ENCODE measurements at regions of chr7 and their contacts with region 1.

Region 1: GRCh38 chr7:150448789-150449147 is 1.7 kb upstream of the GIMAP8 start:
- DNase-seq: peak; percentile 94
- ATAC-seq: peak; percentile 65
- H3K4me3 Mint-ChIP-seq: peak overlapping the region; percentile 97
- H3K27ac Mint-ChIP-seq: peak overlapping the region; percentile 100
- H3K4me1 Mint-ChIP-seq: peaks cover 46% of the 10 kb centered on the region
- H3K27me3 Mint-ChIP-seq: no peaks in the 10 kb centered on the region
- CTCF ChIP-seq: peak; percentile 95

Region 2: DNA sequence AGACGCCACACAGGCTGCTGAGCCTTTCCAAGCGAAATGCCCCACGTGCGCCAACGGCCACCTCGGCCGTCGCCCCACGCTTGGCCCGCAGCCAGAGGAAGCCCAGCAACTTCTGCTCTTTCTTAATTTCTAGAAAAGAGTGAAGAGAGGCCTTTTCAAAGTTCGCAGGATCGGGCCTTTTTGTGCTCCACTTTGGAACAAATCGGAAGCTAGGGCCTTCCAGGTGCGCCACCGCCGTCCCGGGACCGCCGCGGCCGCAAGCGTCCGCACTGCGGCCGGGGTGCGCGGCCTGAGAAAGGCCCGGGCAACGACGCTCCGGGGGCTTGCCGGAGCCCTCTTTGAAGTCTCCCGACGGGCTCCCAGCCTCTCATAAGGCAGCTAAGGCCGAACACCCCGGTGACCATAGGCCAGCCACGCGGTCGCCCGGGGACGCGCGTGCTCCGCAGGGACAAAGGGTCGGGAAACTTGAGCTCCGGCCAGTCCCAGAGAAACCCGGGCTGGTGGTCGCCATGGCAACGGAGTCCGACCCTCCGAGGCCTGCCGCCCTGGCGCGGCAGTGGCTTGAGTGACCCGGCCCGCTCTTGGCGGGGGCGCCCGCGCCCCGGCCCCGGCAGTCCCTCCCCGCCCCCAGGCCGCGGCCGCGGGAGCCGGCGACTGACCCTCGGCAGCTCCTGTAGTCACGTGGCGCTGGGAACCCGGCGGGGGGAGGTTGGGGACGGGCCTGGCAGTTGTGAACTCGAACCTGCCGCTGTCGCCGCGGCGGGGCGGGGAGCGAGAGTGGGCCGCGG is 80.5 kb before region 1 on chr7 and contains the start of gene REPIN1:
- CTCF ChIA-PET with region 1: interaction called, 3 read pairs
- POLR2A ChIA-PET with region 1: interaction called, 13 read pairs
- intact Hi-C with region 1: no loop called
- DNase-seq: peak; percentile 85
- ATAC-seq: peak; percentile 57
- H3K4me3 Mint-ChIP-seq: peak within 1 kb of the TSS; percentile 97
- H3K27ac Mint-ChIP-seq: peak within 1 kb of the TSS; percentile 97
- H3K4me1 Mint-ChIP-seq: peaks cover 56% of the 10 kb centered on the region
- H3K27me3 Mint-ChIP-seq: no peaks in the 10 kb centered on the region
- CTCF ChIP-seq: no peak
- total RNA-seq, gene REPIN1: 56.0 to 59.2 TPM

Region 3: DNA sequence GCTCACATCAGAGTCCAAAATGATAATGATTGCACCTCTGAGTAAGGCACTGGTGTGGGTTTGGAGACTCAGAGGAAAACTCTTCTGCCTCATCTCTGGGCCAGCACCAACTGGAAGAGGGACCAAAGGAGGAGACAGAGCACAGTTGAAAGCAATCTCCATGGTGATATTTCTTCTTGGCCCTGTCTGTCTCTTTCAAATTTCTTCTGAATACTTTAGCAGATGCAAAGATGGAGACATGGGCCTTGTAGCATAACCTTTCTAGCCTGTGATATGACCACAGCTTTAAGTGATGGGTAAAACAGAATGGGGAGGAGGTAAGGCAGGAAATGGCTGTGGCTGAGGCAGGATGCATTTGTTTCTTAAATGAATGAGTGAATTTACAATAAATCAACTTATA is 53.8 kb after region 1 on chr7:
- CTCF ChIA-PET with region 1: interaction called, 8 read pairs
- POLR2A ChIA-PET with region 1: interaction called, 15 read pairs
- intact Hi-C with region 1: no loop called
- DNase-seq: peak; percentile 70
- ATAC-seq: peak; percentile 75
- H3K4me3 Mint-ChIP-seq: peak overlapping the region; percentile 4
- H3K27ac Mint-ChIP-seq: peak overlapping the region; percentile 92
- H3K4me1 Mint-ChIP-seq: peaks cover 68% of the 10 kb centered on the region
- H3K27me3 Mint-ChIP-seq: no peaks in the 10 kb centered on the region
- CTCF ChIP-seq: no peak

Region 4: DNA sequence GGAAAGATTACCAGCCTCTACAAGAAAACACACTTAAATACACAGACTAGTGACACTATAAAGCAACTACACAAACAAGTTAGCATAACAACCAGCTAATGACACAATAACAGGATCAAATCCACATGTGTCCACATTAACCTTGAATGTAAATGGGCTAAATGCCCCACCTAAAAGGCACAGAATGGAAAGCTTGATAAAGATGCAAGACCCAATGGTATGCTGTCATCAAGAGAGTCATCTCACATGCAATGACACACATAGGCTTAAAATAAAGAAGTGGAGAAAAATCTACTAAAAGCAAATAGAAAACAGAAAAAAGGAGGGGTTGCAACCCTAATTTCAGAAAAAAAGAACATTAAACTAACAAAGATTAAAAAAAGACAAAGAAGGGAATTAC is 104.4 kb after region 1 on chr7:
- CTCF ChIA-PET with region 1: interaction called, 14 read pairs
- POLR2A ChIA-PET with region 1: interaction called, 3 read pairs
- intact Hi-C with region 1: no loop called
- DNase-seq: no peak
- ATAC-seq: no peak
- H3K4me3 Mint-ChIP-seq: no peak overlapping the region
- H3K27ac Mint-ChIP-seq: peak overlapping the region; percentile 78
- H3K4me1 Mint-ChIP-seq: peaks cover 66% of the 10 kb centered on the region
- H3K27me3 Mint-ChIP-seq: no peaks in the 10 kb centered on the region
- CTCF ChIP-seq: no peak

Region 5: GRCh38 chr7:150716368-150716767 is 267.6 kb after region 1 on chr7 and contains the start of gene GIMAP1:
- CTCF ChIA-PET with region 1: interaction called, 10 read pairs
- POLR2A ChIA-PET with region 1: interaction called, 4 read pairs
- intact Hi-C with region 1: no loop called
- DNase-seq: peak; percentile 69
- ATAC-seq: peak; percentile 60
- H3K4me3 Mint-ChIP-seq: peak within 1 kb of the TSS; percentile 78
- H3K27ac Mint-ChIP-seq: peak within 1 kb of the TSS; percentile 85
- H3K4me1 Mint-ChIP-seq: peaks cover 53% of the 10 kb centered on the region
- H3K27me3 Mint-ChIP-seq: no peaks in the 10 kb centered on the region
- CTCF ChIP-seq: no peak
- total RNA-seq, gene GIMAP1: 8.7 to 9.3 TPM

Region 6: GRCh38 chr7:150759479-150759878 is 310.7 kb after region 1 on chr7:
- CTCF ChIA-PET with region 1: interaction called, 93 read pairs
- POLR2A ChIA-PET with region 1: interaction called, 9 read pairs
- intact Hi-C with region 1: loop called (anchors 1 kb)
- DNase-seq: no peak
- ATAC-seq: no peak
- H3K4me3 Mint-ChIP-seq: no peak overlapping the region
- H3K27ac Mint-ChIP-seq: no peak overlapping the region
- H3K4me1 Mint-ChIP-seq: peaks cover 27% of the 10 kb centered on the region
- H3K27me3 Mint-ChIP-seq: no peaks in the 10 kb centered on the region
- CTCF ChIP-seq: no peak